Activated naive CD4-positive, alpha-beta T cell treated with anti-CD3 and anti-CD28 coated beads for 36 hours (primary cell): ENCODE measurements at regions of chr12 and their contacts with region 1.

Region 1: DNA sequence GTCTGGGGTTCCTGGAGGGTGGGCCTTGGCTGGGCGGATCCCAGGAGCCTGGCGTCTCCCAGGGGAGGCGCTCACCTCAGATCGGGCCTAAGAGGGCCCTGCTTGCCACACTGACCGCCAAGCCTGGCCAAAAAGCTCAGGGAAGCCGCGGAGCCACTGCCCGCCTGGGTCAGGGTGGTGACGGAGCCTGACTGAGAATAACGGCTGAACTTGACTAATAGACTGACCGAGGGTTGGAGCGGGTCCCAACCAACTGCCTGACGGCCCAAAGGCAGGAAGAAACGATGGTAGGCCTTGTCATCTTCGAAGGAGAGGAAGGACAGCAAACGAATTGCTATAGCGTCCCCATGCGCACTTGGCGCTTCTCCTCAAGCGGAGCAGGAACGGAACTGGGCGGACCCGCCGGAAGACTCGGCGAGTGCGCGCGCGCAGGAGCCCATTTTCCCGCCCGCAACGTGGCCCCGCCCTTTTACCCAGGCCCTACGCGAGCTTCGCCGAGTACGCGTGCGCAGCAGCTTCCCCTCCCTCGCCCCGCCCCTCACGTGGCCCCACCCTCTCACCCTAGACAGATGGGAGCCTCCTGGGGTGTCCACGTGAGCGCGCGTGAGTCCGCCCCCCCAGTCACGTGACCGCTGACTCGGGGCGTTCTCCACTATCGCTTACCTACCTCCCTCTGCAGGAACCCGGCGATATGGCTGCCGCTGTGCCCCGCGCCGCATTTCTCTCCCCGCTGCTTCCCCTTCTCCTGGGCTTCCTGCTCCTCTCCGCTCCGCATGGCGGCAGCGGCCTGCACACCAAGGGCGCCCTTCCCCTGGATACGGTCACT is at the starts of genes ERP29 and TMEM116:
- DNase-seq: peak; percentile 100
- H3K4me3 Mint-ChIP-seq: peak within 1 kb of the TSS; percentile 98
- H3K27ac Mint-ChIP-seq: peak within 1 kb of the TSS; percentile 96
- H3K4me1 Mint-ChIP-seq: peaks cover 48% of the 10 kb centered on the region
- H3K27me3 Mint-ChIP-seq: no peaks in the 10 kb centered on the region
- total RNA-seq, gene ERP29: 101 to 107 TPM
- total RNA-seq, gene TMEM116: 12.7 to 13.4 TPM

Region 2: GRCh38 chr12:111405149-111405860 is 607.7 kb before region 1 on chr12:
- CTCF ChIA-PET with region 1: no interaction called
- intact Hi-C with region 1: loop called (anchors 1 kb)
- DNase-seq: peak; percentile 99
- H3K4me3 Mint-ChIP-seq: peak overlapping the region; percentile 77
- H3K27ac Mint-ChIP-seq: peak overlapping the region; percentile 96
- H3K4me1 Mint-ChIP-seq: peaks cover 57% of the 10 kb centered on the region
- H3K27me3 Mint-ChIP-seq: no peaks in the 10 kb centered on the region

Region 3: DNA sequence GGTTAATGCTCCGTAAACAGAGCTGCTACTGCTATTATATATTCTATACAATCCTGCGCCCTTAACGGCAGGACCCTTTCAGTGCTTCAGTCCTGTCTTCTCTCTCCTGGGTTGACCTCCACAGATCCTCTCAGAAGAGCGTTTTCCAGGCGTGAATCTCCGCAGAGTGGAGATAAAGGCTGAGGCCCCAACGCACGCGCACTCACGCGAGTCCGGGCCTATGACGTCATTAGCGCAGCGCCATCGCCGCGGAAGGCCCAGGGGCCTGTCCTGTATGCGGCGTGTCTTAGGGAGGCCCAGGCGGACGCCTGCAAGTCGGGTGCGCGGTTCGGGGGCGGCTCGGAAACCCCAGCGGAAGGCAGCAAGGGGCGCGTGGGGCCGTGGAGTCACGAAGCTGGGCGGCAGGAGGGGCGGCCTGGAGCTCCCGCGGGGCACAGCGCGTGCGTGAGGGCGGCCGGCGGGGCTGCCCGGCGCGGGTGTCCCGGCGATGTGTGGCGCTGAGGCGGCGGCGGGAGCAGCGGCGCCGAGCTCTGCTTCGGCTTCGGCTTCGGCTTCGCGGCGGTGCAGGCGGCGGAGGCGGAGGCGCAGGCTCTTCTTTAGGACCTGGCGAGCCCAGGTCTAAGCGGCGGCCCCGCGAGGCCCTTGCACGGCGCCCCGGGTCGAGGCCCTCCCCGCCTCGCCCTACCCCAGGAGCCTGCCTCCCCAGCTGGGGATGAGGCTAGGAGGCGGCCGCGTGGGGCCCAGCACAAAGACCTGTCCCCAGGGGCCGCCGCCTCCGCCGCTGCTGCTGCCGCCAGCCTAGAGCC is 171.0 kb before region 1 on chr12 and contains the start of gene MAPKAPK5:
- CTCF ChIA-PET with region 1: no interaction called
- intact Hi-C with region 1: loop called (anchors 1 kb)
- DNase-seq: peak; percentile 97
- H3K4me3 Mint-ChIP-seq: peak within 1 kb of the TSS; percentile 91
- H3K27ac Mint-ChIP-seq: peak within 1 kb of the TSS; percentile 95
- H3K4me1 Mint-ChIP-seq: peaks cover 54% of the 10 kb centered on the region
- H3K27me3 Mint-ChIP-seq: no peaks in the 10 kb centered on the region
- total RNA-seq, gene MAPKAPK5: 41.9 to 43.6 TPM

Region 4: DNA sequence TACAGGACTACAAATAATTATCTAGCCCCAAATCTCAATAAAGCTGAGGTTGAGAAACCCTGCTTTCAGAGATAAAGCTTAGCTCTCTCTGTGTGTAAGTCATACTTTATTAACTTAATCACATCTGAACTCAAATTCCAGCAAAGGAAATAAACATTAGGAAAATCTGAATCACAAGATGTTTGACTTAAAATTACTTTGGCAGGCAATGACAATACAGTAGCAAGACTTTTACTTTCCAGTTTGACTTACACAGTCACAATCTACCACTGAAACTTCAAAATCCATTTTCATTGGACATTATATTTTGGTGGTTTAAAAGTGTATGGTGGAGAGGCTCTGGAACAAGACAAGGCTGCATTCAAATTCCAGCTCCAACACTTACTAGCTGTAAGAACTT is 11.4 kb before region 1 on chr12:
- CTCF ChIA-PET with region 1: interaction called, 12 read pairs
- intact Hi-C with region 1: loop called (anchors 2 kb)
- DNase-seq: no peak
- H3K4me3 Mint-ChIP-seq: peak overlapping the region; percentile 40
- H3K27ac Mint-ChIP-seq: peak overlapping the region; percentile 80
- H3K4me1 Mint-ChIP-seq: peaks cover 64% of the 10 kb centered on the region
- H3K27me3 Mint-ChIP-seq: no peaks in the 10 kb centered on the region

Region 5: DNA sequence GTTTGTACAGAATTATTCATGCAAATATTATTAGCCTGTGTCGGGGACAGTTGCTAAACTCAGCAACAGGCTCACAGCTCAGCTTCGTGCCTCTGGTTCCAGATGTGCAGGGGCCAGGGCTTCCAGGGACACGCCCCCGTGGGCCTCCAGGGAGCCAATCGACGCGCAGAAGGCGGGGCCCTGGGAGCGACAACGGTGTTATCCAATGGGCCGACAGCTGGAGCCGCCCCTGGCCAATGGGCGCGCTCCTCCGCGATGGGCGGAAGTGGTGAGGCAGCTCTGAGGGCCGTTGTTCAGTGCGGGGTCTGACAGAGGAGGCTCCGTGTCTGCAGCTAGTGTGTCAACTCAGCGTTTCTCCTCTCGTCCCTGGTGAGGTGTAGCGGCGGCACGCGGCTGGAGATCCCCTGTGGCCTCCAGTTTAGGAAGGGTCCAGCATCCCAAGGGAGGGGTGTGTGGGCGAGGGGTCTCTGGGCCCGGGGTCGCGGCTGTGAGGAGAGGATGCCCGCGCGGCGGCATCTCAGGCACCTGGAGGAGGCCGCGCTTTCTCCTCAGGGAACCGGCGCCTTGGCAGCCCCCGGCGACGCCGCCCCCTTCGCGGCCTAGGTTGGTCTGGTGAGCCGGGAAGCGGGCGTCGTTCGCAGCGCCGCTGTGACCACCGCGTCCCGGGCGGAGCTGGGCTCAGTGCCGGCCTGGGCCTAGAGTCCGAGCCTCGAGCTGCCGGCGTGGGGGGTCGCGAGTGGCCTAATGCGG is 112.4 kb after region 1 on chr12 and contains the start of gene TRAFD1:
- CTCF ChIA-PET with region 1: no interaction called
- intact Hi-C with region 1: loop called (anchors 1 kb)
- DNase-seq: peak; percentile 98
- H3K4me3 Mint-ChIP-seq: peak within 1 kb of the TSS; percentile 72
- H3K27ac Mint-ChIP-seq: peak within 1 kb of the TSS; percentile 75
- H3K4me1 Mint-ChIP-seq: peaks cover 42% of the 10 kb centered on the region
- H3K27me3 Mint-ChIP-seq: no peaks in the 10 kb centered on the region
- total RNA-seq, gene TRAFD1: 49.6 to 55.7 TPM

Region 6: GRCh38 chr12:112409064-112409905 is 396.3 kb after region 1 on chr12 and contains the start of gene RPL6:
- CTCF ChIA-PET with region 1: no interaction called
- intact Hi-C with region 1: loop called (anchors 1 kb)
- DNase-seq: peak; percentile 88
- H3K4me3 Mint-ChIP-seq: peak within 1 kb of the TSS; percentile 100
- H3K27ac Mint-ChIP-seq: peak within 1 kb of the TSS; percentile 100
- H3K4me1 Mint-ChIP-seq: peaks cover 43% of the 10 kb centered on the region
- H3K27me3 Mint-ChIP-seq: no peaks in the 10 kb centered on the region
- total RNA-seq, gene RPL6: 2,358 to 2,432 TPM